Prostate gland (tissue), 2 donors: ENCODE measurements at regions of chr11 and their contacts with region 1.

Region 1: GRCh38 chr11:19742588-19743292 is 30.1 kb downstream of the NAV2 start:
- DNase-seq: peak; percentile 80
- H3K4me3 ChIP-seq: no peak overlapping the region
- H3K27ac ChIP-seq: no peak overlapping the region
- H3K4me1 ChIP-seq: no peaks in the 10 kb centered on the region
- H3K27me3 ChIP-seq: no peaks in the 10 kb centered on the region
- CTCF ChIP-seq: peak; percentile 82 to 98 (median 96)
- POLR2A ChIP-seq: no peak

Region 2: GRCh38 chr11:19055016-19055415 is 687.7 kb before region 1 on chr11:
- intact Hi-C with region 1: no loop called
- DNase-seq: no peak
- H3K4me3 ChIP-seq: no peak overlapping the region
- H3K27ac ChIP-seq: no peak overlapping the region
- H3K4me1 ChIP-seq: no peaks in the 10 kb centered on the region
- H3K27me3 ChIP-seq: no peaks in the 10 kb centered on the region
- CTCF ChIP-seq: no peak
- POLR2A ChIP-seq: no peak

Region 3: DNA sequence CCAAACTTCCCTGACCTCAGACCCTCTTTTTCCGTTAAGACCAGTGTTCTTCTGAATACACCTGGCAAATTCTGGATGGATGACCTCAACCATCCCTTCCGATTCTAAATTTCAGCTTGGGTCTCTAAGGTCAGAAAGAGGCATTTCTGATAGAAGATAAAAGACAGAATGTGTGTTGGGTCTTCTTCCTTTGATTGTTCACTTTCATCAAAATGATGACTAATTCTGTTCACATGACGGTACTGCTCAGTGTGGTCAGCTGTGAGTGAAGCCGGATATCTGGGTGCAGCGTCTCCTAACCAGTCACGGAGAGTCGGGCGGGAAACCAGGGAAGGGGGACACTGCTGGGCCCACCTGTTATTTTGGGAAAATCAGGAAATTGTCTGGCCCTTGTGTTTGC is 181.7 kb before region 1 on chr11:
- intact Hi-C with region 1: loop called (anchors 1 kb)
- DNase-seq: no peak
- H3K4me3 ChIP-seq: no peak overlapping the region
- H3K27ac ChIP-seq: no peak overlapping the region
- H3K4me1 ChIP-seq: peaks cover 3% of the 10 kb centered on the region
- H3K27me3 ChIP-seq: no peaks in the 10 kb centered on the region
- CTCF ChIP-seq: no peak
- POLR2A ChIP-seq: no peak

Region 4: DNA sequence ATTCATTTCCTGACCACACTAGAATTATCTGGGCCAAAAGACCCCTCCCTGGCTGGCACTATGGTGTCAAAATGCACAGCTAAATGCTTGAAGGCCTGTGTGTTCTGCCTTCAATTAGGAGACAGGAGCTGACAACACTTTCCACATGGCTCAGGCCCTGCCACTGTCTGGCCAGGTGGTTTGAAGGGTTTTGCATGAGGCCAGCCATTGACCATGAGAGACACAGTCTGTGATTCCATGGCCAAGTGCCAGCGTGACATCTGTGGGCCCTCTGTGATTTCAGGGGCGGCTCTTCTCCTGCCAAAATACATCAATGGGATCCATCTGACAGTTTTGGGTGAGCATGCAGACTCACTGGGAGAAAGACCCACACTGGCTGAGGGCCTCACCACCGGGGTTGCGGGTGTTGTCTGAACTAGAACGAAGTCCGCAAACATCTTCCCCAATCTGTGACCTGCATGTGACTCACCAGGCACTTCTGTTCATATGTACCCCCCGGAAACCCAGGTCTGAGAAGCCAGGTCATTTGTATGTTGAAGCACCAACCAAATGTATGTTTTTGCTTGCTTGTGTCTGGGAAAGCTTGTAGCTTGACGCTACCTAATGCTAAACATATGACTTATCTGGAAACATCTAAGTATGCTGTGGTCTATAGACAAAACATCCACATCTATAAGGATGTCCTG is 50.8 kb before region 1 on chr11:
- intact Hi-C with region 1: no loop called
- DNase-seq: no peak
- H3K4me3 ChIP-seq: no peak overlapping the region
- H3K27ac ChIP-seq: no peak overlapping the region
- H3K4me1 ChIP-seq: no peaks in the 10 kb centered on the region
- H3K27me3 ChIP-seq: no peaks in the 10 kb centered on the region
- CTCF ChIP-seq: no peak
- POLR2A ChIP-seq: no peak

Region 5: GRCh38 chr11:19903620-19904069 is 160.9 kb after region 1 on chr11:
- intact Hi-C with region 1: loop called (anchors 2 kb)
- DNase-seq: peak; percentile 60
- H3K4me3 ChIP-seq: no peak overlapping the region
- H3K27ac ChIP-seq: no peak overlapping the region
- H3K4me1 ChIP-seq: no peaks in the 10 kb centered on the region
- H3K27me3 ChIP-seq: no peaks in the 10 kb centered on the region
- CTCF ChIP-seq: peak; percentile 23 to 69 (median 63)
- POLR2A ChIP-seq: no peak